PC-9 (cell line): ENCODE measurements at regions of chr6 and their contacts with region 1.

Region 1: GRCh38 chr6:26553635-26554446 is 15.7 kb downstream of the HMGN4 start:
- DNase-seq: peak; percentile 85 to 87
- H3K4me3 ChIP-seq: peak overlapping the region; percentile 69
- H3K27ac ChIP-seq: peak overlapping the region; percentile 60
- H3K4me1 ChIP-seq: peaks cover 31% of the 10 kb centered on the region
- H3K27me3 ChIP-seq: no peaks in the 10 kb centered on the region
- CTCF ChIP-seq: no peak

Region 2: GRCh38 chr6:25490018-25490801 is 1063.6 kb before region 1 on chr6:
- CTCF ChIA-PET with region 1: no interaction called
- POLR2A ChIA-PET with region 1: no interaction called
- intact Hi-C with region 1: no loop called
- DNase-seq: peak; percentile 68 to 73
- H3K4me3 ChIP-seq: no peak overlapping the region
- H3K27ac ChIP-seq: no peak overlapping the region
- H3K4me1 ChIP-seq: peaks cover 4% of the 10 kb centered on the region
- H3K27me3 ChIP-seq: no peaks in the 10 kb centered on the region
- CTCF ChIP-seq: peak; percentile 85

Region 3: DNA sequence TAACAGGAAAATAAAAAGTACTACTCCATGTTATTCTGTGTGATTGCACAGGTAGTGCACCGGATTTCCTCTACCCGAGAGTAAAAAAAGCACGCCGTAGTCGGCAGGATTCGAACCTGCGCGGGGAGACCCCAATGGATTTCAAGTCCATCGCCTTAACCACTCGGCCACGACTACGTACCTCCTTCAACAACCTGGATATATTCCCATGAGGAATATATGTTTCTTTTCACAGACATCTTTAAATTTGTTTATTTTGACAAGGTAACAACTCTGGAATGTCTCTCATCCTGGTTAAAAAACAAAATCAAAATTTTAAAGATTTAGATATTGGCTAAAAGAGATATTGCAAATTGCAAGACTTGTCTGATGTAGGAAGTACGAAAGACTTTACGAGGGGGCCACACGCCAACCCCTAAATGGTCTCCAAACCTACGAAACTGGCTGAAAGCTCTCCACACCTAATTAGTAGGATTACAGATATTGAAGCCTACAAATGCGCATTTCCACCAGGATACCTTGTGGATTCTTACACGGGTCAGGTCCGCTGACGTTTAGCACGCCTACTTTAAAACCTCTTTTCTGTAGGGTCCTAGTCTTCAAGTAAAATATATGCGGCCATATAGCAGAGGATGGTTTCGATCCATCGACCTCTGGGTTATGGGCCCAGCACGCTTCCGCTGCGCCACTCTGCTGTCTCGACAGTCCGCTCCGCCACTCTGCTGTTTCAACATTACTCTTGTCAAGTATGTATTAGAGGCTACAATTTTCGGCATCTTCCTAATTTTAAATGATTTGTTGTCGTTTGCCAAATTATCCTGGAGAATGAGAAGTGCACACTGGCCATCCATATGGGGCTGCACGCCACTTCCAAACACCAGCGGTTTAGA is 241.1 kb before region 1 on chr6:
- CTCF ChIA-PET with region 1: interaction called, 4 read pairs
- POLR2A ChIA-PET with region 1: no interaction called
- intact Hi-C with region 1: loop called (anchors 5 kb)
- DNase-seq: peak; percentile 74 to 77
- H3K4me3 ChIP-seq: peak overlapping the region; percentile 69
- H3K27ac ChIP-seq: peak overlapping the region; percentile 74
- H3K4me1 ChIP-seq: peaks cover 13% of the 10 kb centered on the region
- H3K27me3 ChIP-seq: no peaks in the 10 kb centered on the region
- CTCF ChIP-seq: no peak

Region 4: GRCh38 chr6:26514984-26515383 is 38.9 kb before region 1 on chr6:
- CTCF ChIA-PET with region 1: no interaction called
- POLR2A ChIA-PET with region 1: no interaction called
- intact Hi-C with region 1: no loop called
- DNase-seq: no peak
- H3K4me3 ChIP-seq: no peak overlapping the region
- H3K27ac ChIP-seq: no peak overlapping the region
- H3K4me1 ChIP-seq: peaks cover 2% of the 10 kb centered on the region
- H3K27me3 ChIP-seq: no peaks in the 10 kb centered on the region
- CTCF ChIP-seq: no peak